ENCODE measurements at regions of chr7 and their contacts with region 1.

Region 1: GRCh38 chr7:39051707-39052106 is 74.0 kb downstream of the POU6F2 start:
- DNase-seq: no peak
- H3K4me3 ChIP-seq: no peak overlapping the region
- H3K4me3 Mint-ChIP-seq: no peak overlapping the region
- H3K27ac Mint-ChIP-seq: no peak overlapping the region
- H3K4me1 ChIP-seq: peaks cover 16% of the 10 kb centered on the region
- H3K4me1 Mint-ChIP-seq: peaks cover 17% of the 10 kb centered on the region
- H3K27me3 ChIP-seq: no peaks in the 10 kb centered on the region
- H3K27me3 Mint-ChIP-seq: no peaks in the 10 kb centered on the region
- CTCF ChIP-seq: no peak

Region 2: DNA sequence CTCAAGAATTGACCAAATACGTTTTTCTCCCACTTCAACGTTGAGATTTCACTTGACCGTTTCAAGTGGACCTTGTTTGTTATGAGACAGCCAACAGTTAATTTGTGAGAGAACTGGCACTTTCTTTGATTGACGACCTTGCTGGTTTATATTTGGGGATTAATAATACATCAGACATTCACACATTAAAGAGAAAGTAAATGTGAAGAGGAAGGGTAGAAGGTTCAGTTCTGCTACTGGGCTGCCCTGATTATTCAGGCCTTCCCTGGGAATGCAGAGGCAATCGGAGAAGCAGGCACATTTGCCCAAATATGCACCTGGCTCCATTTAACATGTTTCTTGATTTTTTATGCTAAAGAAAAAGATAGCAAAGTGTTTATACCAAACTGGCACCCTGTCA is 40.1 kb after region 1 on chr7:
- CTCF ChIA-PET with region 1: no interaction called
- POLR2A ChIA-PET with region 1: no interaction called
- intact Hi-C with region 1: loop called (anchors 1 kb)
- DNase-seq: no peak
- H3K4me3 ChIP-seq: no peak overlapping the region
- H3K4me3 Mint-ChIP-seq: no peak overlapping the region
- H3K27ac Mint-ChIP-seq: no peak overlapping the region
- H3K4me1 ChIP-seq: no peaks in the 10 kb centered on the region
- H3K4me1 Mint-ChIP-seq: no peaks in the 10 kb centered on the region
- H3K27me3 ChIP-seq: no peaks in the 10 kb centered on the region
- H3K27me3 Mint-ChIP-seq: peaks cover 3% of the 10 kb centered on the region
- CTCF ChIP-seq: no peak